ENCODE measurements at regions of chr3 and their contacts with region 1.

Region 1: GRCh38 chr3:168095611-168096209 is at the start of gene GOLIM4:
- DNase-seq: peak; percentile 96
- ATAC-seq: peak; percentile 94 to 98 (median 96)
- H3K4me3 ChIP-seq: peak within 1 kb of the TSS; percentile 65 to 99 (median 79)
- H3K27ac ChIP-seq: peak within 1 kb of the TSS; percentile 80 to 99 (median 96)
- H3K4me1 ChIP-seq: peaks cover 4 to 50% (median 42%) of the 10 kb centered on the region in 9 donors
- H3K27me3 ChIP-seq: no peaks in the 10 kb centered on the region
- CTCF ChIP-seq: peak in 3 of 9 donors; percentile 18 to 47 (median 42)
- total RNA-seq, gene GOLIM4: 56.6 to 103 (median 77.3) TPM

Region 2: DNA sequence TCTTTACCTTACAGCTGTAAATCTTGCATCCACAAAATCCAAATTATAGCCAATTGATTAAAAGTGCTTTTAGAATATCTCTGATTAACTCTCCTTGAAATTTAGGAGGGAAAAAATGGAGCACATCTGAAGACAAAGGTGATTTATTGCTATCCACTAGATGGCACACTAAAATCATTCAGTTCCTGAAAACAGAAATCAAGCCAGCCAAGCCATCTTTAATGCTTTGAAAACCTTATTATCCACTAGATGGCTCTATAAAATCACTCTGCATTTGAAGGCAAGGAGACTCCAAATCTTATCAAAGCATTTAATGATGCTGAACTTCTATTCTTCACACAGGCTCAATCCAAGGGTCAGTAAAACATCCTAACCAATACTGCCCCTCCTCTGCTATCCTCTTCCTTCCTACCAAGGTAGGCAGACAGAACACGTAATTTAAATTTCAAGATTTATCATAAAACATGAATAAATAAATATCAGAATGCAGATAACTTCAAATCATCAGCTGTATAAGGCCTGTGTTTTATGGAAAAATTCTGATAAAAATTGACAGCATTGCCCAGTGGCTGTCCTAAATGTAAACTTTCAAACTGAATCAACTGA is 48.4 kb before region 1 on chr3:
- intact Hi-C with region 1: loop called in 8 of 10 experiments (anchors 2 to 5 kb)
- DNase-seq: no peak
- ATAC-seq: peak; percentile 52 to 67 (median 63)
- H3K4me3 ChIP-seq: no peak overlapping the region
- H3K27ac ChIP-seq: no peak overlapping the region
- H3K4me1 ChIP-seq: peaks cover 0 to 71% (median 47%) of the 10 kb centered on the region in 9 donors
- H3K27me3 ChIP-seq: no peaks in the 10 kb centered on the region
- CTCF ChIP-seq: peak; percentile 72 to 97 (median 83)

Region 3: GRCh38 chr3:168205451-168205850 is 109.7 kb after region 1 on chr3:
- intact Hi-C with region 1: no loop called
- DNase-seq: no peak
- ATAC-seq: no peak
- H3K4me3 ChIP-seq: no peak overlapping the region
- H3K27ac ChIP-seq: no peak overlapping the region
- H3K4me1 ChIP-seq: no peaks in the 10 kb centered on the region
- H3K27me3 ChIP-seq: peaks cover 0 to 6% (median 0%) of the 10 kb centered on the region in 7 donors
- CTCF ChIP-seq: no peak

Region 4: DNA sequence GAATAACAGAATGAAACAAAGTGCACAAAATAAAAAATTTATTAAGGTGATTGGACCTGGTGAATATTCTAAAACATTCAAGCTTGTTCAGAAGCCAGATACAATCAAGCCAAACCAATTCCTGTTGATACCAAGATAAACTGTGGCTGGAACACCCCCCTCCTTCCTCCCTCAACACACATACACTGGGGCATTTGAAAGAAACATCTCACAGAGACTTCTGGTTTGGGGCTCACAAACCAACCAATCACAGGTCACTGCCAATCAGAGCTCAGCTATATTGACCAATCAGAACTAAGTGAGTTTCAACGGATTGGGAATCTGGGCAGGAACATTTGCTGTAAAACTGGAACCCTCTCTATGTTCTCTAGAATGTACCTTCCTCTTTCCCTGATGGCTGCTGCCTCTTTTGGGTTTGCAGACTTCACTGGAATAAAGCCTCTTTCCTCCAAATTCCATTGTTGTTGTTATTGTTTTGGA is 340.6 kb after region 1 on chr3:
- intact Hi-C with region 1: no loop called
- DNase-seq: no peak
- ATAC-seq: no peak
- H3K4me3 ChIP-seq: no peak overlapping the region
- H3K27ac ChIP-seq: no peak overlapping the region
- H3K4me1 ChIP-seq: no peaks in the 10 kb centered on the region
- H3K27me3 ChIP-seq: no peaks in the 10 kb centered on the region
- CTCF ChIP-seq: no peak